ENCODE measurements at regions of chr11 and their contacts with region 1.

Region 1: DNA sequence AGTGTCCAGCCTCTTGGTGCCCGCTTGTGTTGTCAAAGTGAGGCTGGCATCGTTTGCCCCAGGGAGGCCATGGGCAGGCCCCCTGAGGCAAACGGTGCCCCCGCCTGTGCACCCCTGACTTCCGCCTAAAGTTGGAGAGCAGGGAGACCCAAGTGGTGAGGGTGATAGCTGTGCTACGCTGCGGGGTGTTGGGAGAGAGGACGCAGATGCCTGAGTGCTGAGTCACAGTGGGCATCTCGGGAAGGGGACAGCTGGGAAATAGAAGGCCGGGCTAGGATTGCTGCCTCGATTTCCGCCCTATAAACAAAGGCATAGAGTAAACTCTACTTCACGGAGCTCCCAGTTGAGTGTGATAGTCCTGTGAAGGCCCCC is 5.8 kb downstream of the GRIK4 start:
- DNase-seq: peak; percentile 64
- H3K4me3 ChIP-seq: no peak overlapping the region
- H3K27ac ChIP-seq: peak overlapping the region in 2 of 8 donors; percentile 28 to 64
- H3K4me1 ChIP-seq: peaks cover 0 to 4% (median 0%) of the 10 kb centered on the region in 6 donors
- H3K27me3 ChIP-seq: peaks cover 0 to 87% (median 8%) of the 10 kb centered on the region in 7 donors
- CTCF ChIP-seq: no peak
- POLR2A ChIP-seq: no peak

Region 2: DNA sequence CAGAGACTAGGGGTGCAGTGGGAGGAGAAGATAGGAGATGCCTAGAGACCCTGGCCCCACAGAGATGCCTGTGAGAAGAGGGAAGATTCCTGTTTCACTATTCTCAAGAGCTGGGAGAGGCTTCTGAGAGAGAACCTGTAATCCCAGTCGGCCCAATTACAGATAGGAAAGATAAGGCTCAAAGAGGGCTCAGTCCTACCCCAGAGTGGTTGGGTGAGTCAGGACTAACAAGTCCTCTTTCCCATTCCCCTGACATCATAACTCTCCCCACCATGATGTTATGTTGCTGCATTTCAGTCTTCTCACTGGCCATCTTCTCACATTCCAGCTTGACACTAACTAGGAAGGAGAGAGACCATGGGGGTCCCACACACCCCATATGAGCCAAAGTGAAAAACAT is 163.3 kb before region 1 on chr11:
- intact Hi-C with region 1: no loop called
- DNase-seq: no peak
- H3K4me3 ChIP-seq: no peak overlapping the region
- H3K27ac ChIP-seq: no peak overlapping the region
- H3K4me1 ChIP-seq: peaks cover 0 to 11% (median 0%) of the 10 kb centered on the region in 6 donors
- H3K27me3 ChIP-seq: peaks cover 0 to 61% (median 0%) of the 10 kb centered on the region in 7 donors
- CTCF ChIP-seq: no peak
- POLR2A ChIP-seq: no peak

Region 3: GRCh38 chr11:120569861-120570260 is 52.5 kb after region 1 on chr11:
- intact Hi-C with region 1: no loop called
- DNase-seq: peak; percentile 29
- H3K4me3 ChIP-seq: no peak overlapping the region
- H3K27ac ChIP-seq: no peak overlapping the region
- H3K4me1 ChIP-seq: peaks cover 4 to 10% (median 7%) of the 10 kb centered on the region in 6 donors
- H3K27me3 ChIP-seq: peaks cover 0 to 32% (median 7%) of the 10 kb centered on the region in 7 donors
- CTCF ChIP-seq: no peak
- POLR2A ChIP-seq: no peak

Region 4: DNA sequence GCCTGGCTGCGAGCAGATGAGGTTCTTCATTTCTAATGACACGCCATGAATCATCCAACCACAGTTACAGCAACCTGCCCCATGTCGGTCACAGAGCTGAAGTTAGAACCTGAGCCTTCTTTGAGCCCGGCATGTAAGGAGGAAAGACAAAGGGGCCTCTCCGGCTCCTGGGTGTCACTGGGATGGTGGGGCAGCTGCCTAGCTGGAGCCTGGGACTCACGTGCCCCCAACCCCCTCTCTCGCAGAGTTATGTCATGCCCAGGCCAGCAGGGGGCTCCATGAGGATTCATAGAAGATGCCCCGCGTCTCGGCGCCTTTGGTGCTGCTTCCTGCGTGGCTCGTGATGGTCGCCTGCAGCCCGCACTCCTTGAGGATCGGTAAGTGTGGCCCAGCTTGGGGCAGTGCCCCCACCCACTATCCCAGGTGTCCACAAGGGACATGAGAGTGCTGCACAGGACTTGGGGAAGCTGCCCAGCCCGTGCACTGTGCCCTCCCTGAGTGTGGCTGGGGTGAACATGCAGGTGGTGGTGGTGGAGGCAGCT is 142.7 kb after region 1 on chr11:
- intact Hi-C with region 1: no loop called
- DNase-seq: peak; percentile 80
- H3K4me3 ChIP-seq: no peak overlapping the region
- H3K27ac ChIP-seq: no peak overlapping the region
- H3K4me1 ChIP-seq: peaks cover 0 to 22% (median 9%) of the 10 kb centered on the region in 6 donors
- H3K27me3 ChIP-seq: peaks cover 0 to 29% (median 0%) of the 10 kb centered on the region in 7 donors
- CTCF ChIP-seq: peak in 6 of 11 experiments; percentile 8 to 61 (median 37)
- POLR2A ChIP-seq: no peak

Region 5: DNA sequence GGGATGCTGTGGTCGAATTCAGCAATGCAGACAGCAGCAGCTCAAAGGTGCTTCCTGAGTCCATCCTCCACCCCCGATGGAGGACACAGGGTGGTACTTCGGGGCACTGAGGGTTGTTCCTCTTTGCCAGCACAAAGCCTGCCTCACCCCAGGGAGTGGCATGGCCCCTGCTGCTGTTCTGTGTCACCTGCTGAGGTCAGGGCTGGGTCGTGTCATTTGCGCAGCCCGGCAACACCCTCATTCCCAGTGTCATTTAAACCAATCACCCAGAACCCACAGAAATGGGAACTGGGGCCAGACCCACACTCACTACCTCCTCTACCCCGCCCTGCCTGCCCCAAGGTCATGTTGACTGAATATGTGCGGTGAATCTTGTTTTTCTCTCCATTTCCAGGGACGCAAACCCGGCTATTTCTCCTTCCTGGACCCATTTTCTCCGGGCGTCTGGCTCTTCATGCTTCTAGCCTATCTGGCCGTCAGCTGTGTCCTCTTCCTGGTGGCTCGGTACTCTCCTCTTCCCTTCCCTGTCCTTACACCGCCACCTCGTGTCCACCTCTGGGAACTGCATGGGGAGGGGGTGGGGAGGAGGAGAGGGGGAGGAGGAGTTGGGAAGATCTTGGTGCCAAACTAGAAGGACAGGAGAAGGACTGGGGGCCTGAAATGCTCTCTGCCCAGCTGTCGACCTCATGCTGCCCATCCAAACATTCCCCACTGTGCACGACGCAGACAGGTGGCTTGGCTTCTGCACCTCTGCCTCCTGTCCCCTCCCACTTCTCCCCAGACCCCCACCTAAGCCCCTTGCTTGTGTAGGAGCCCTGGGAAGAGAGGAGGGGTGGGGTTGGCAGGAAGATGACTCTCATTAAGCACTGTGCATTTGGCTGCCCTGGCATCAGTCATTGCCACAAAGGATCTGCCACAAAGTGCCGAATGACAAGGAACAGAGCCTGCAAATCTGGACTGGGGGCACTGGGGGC is 435.4 kb after region 1 on chr11:
- intact Hi-C with region 1: loop called (anchors 5 kb)
- DNase-seq: peak; percentile 84
- H3K4me3 ChIP-seq: peak overlapping the region in 3 of 8 donors; percentile 5 to 55 (median 18)
- H3K27ac ChIP-seq: no peak overlapping the region
- H3K4me1 ChIP-seq: peaks cover 0 to 19% (median 11%) of the 10 kb centered on the region in 6 donors
- H3K27me3 ChIP-seq: peaks cover 0 to 41% (median 0%) of the 10 kb centered on the region in 7 donors
- CTCF ChIP-seq: peak; percentile 59 to 88 (median 75)
- POLR2A ChIP-seq: no peak